ENCODE measurements at regions of chr13 and their contacts with region 1.

Region 1: GRCh38 chr13:81230386-81230785 is 889.5 kb upstream of the SPRY2 start:
- DNase-seq: no peak
- ATAC-seq: no peak
- H3K4me3 Mint-ChIP-seq: no peak overlapping the region
- H3K27ac Mint-ChIP-seq: no peak overlapping the region
- H3K4me1 Mint-ChIP-seq: no peaks in the 10 kb centered on the region
- H3K27me3 Mint-ChIP-seq: no peaks in the 10 kb centered on the region

Region 2: GRCh38 chr13:81153478-81153877 is 76.9 kb before region 1 on chr13:
- CTCF ChIA-PET with region 1: no interaction called
- POLR2A ChIA-PET with region 1: no interaction called
- intact Hi-C with region 1: no loop called
- DNase-seq: no peak
- ATAC-seq: no peak
- H3K4me3 Mint-ChIP-seq: no peak overlapping the region
- H3K27ac Mint-ChIP-seq: no peak overlapping the region
- H3K4me1 Mint-ChIP-seq: no peaks in the 10 kb centered on the region
- H3K27me3 Mint-ChIP-seq: no peaks in the 10 kb centered on the region

Region 3: DNA sequence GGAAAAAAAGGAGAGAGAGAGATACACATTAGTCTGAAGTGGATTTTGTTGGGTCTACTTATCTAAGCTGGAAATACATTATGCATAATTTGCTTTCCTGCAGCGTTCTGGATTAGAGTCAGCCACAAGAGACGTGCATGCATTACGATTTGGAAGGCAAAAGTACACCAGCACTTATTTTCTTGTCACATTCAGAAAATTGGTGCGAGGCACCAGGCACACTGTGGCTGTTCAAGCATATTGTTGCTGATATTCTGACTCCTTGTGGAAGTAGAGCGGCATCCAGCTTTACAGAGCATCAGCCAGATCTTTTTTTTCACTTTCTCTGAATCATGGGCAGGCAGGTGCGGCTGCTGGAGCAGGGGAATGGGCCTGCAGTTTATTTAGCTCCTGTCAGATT is 16.2 kb after region 1 on chr13:
- CTCF ChIA-PET with region 1: no interaction called
- POLR2A ChIA-PET with region 1: no interaction called
- intact Hi-C with region 1: loop called (anchors 1 kb)
- DNase-seq: no peak
- ATAC-seq: no peak
- H3K4me3 Mint-ChIP-seq: no peak overlapping the region
- H3K27ac Mint-ChIP-seq: no peak overlapping the region
- H3K4me1 Mint-ChIP-seq: no peaks in the 10 kb centered on the region
- H3K27me3 Mint-ChIP-seq: no peaks in the 10 kb centered on the region

Region 4: GRCh38 chr13:81872581-81872980 is 642.2 kb after region 1 on chr13:
- CTCF ChIA-PET with region 1: no interaction called
- POLR2A ChIA-PET with region 1: no interaction called
- intact Hi-C with region 1: no loop called
- DNase-seq: no peak
- ATAC-seq: no peak
- H3K4me3 Mint-ChIP-seq: no peak overlapping the region
- H3K27ac Mint-ChIP-seq: no peak overlapping the region
- H3K4me1 Mint-ChIP-seq: no peaks in the 10 kb centered on the region
- H3K27me3 Mint-ChIP-seq: no peaks in the 10 kb centered on the region

Measured in activated CD4-positive, alpha-beta T cell treated with anti-CD3 and anti-CD28 coated beads for 36 hours (primary cell).